Activated CD4-positive, alpha-beta T cell treated with anti-CD3 and anti-CD28 coated beads for 36 hours (primary cell): ENCODE measurements at regions of chr1 and their contacts with region 1.

Region 1: DNA sequence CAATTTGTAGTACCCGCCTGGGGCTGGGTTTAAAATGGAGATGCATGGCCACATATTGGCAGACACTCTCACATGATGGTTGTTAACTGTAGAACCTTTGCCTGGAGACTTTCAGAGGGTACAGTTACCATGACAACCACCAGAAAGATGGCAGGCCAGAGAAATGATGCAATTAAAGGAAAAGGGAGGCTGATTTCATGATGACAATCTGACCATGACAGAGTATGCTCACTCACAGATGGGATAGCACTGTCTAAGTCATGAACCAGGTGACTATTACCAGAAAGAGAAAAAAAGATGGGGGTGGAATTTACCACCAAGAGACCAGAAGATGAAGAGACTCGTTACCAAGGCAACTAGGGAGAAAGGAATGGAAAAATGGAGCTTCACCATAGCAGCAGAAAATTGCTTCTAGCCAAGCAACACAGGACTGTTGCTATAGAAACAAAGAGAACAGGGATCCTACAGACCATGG is 3.5 kb upstream of the TRIT1 start:
- DNase-seq: peak; percentile 27
- ATAC-seq: peak; percentile 52
- H3K4me3 Mint-ChIP-seq: no peak overlapping the region
- H3K27ac Mint-ChIP-seq: no peak overlapping the region
- H3K4me1 Mint-ChIP-seq: peaks cover 8% of the 10 kb centered on the region
- H3K27me3 Mint-ChIP-seq: peaks cover 5% of the 10 kb centered on the region

Region 2: DNA sequence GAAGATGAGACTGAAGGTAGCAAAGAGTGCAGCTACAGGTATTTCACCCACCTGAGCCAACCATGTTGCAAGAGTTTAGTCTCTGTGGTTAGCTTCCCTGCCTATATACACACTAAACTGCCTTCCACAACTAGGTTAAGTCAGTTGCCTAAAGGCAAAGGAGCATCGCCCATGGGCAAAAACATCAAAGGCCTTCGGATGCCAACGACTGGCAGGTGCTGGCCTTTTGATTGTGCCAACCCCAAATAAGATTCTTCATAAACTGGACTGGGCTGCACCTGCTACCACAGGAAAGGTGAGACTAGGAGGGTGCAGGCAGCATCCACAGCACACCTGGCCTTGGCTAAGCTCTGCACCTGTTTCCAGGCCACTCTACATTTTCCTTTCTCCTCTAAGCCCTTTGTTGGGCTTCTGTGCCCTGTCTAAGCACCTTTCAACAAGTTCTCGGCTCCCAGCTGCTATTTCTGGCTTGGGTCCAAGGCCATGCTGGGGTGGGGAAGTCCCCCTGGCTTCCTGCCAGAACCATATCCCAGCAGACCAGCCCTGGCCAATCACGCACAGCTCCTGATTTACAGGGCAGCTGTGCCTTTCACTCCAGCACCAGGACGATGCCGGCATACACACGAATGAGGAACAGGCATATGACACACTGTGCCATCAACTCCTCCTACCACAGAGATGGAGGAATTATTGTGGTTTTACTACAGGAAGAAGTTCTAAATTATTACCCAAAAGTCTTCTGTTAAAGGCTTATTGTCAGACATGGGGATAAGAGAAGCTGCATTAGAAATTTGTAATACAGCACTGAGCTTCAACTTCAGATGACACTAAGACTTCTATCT is 41.3 kb before region 1 on chr1:
- CTCF ChIA-PET with region 1: interaction called, 3 read pairs
- POLR2A ChIA-PET with region 1: no interaction called
- intact Hi-C with region 1: loop called in 1 of 2 experiments (anchors 5 kb)
- DNase-seq: peak; percentile 90
- ATAC-seq: peak; percentile 97
- H3K4me3 Mint-ChIP-seq: peak overlapping the region; percentile 16
- H3K27ac Mint-ChIP-seq: peak overlapping the region; percentile 78
- H3K4me1 Mint-ChIP-seq: peaks cover 58% of the 10 kb centered on the region
- H3K27me3 Mint-ChIP-seq: no peaks in the 10 kb centered on the region

Region 3: DNA sequence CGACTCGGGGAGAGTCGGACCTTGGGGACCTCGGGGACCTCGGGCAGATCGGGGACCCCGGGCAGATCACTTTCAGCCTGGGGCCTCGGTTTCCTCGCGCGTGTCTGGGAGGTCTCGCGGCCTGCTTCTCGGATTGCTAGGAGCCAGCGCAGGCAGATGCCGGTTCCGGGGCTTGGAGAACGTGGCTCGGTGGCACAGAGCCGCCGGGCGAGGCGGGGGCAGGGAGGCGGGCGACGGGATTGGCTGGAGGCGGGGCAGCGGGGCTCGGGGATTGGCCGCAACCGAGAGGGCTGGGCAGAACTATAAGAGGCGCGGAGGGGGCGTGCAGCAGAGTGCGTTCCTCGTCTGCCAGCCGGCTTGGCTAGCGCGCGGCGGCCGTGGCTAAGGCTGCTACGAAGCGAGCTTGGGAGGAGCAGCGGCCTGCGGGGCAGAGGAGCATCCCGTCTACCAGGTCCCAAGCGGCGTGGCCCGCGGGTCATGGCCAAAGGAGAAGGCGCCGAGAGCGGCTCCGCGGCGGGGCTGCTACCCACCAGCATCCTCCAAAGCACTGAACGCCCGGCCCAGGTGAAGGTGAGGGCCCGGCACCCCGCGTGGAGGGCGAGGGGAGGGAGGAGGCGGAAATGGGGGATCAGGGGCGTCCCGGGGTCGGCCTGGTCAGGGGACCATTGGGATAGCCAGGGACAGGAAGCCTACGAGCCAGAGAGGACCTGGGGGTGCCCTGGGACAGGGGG is 68.2 kb after region 1 on chr1 and contains the start of gene MFSD2A:
- CTCF ChIA-PET with region 1: no interaction called
- POLR2A ChIA-PET with region 1: no interaction called
- intact Hi-C with region 1: loop called in 1 of 2 experiments (anchors 1 kb)
- DNase-seq: peak; percentile 96
- ATAC-seq: peak; percentile 94
- H3K4me3 Mint-ChIP-seq: peak within 1 kb of the TSS; percentile 88
- H3K27ac Mint-ChIP-seq: peak within 1 kb of the TSS; percentile 82
- H3K4me1 Mint-ChIP-seq: peaks cover 32% of the 10 kb centered on the region
- H3K27me3 Mint-ChIP-seq: no peaks in the 10 kb centered on the region
- total RNA-seq, gene MFSD2A: 8.8 to 12.8 TPM